CD14-positive monocyte (primary cell): ENCODE measurements at regions of chr21 and their contacts with region 1.

Region 1: DNA sequence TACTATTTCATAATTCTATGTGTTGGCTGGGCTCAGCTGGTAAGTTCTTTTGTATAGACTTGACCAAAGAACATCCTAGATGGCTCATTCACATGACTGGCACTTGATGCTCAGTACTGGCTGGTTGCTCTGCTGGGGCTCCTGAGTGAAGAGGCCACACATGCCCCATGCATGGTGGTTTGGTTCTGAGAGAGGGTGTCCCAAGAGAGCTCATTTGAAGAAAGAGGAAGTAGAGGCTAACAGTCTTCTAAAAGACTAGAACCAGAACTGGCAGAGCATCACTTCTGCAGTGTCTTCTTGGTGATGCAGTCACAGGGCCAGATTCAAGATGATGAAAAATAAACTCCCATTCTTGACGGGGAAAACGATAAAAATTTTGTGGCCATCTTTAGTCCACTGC is 5.2 kb upstream of the BACH1 start:
- DNase-seq: peak; percentile 57 to 69 (median 62)
- H3K4me3 ChIP-seq: no peak overlapping the region
- H3K4me3 Mint-ChIP-seq: no peak overlapping the region
- H3K27ac ChIP-seq: peak overlapping the region; percentile 14 to 29
- H3K27ac Mint-ChIP-seq: peak overlapping the region in 5 of 7 donors; percentile 12 to 89 (median 66)
- H3K4me1 ChIP-seq: peaks cover 25 to 61% of the 10 kb centered on the region in 2 donors
- H3K4me1 Mint-ChIP-seq: peaks cover 51% of the 10 kb centered on the region
- H3K27me3 ChIP-seq: no peaks in the 10 kb centered on the region
- H3K27me3 Mint-ChIP-seq: no peaks in the 10 kb centered on the region
- CTCF ChIP-seq: no peak

Region 2: GRCh38 chr21:29245104-29245643 is 48.3 kb before region 1 on chr21:
- intact Hi-C with region 1: loop called in 1 of 2 experiments (anchors 5 kb)
- DNase-seq: peak in 1 of 3 donors; percentile 35
- H3K4me3 ChIP-seq: peak overlapping the region in 1 of 3 experiments; percentile 9
- H3K4me3 Mint-ChIP-seq: no peak overlapping the region
- H3K27ac ChIP-seq: peak overlapping the region; percentile 12 to 72
- H3K27ac Mint-ChIP-seq: peak overlapping the region; percentile 70 to 87 (median 78)
- H3K4me1 ChIP-seq: peaks cover 30 to 59% of the 10 kb centered on the region in 2 donors
- H3K4me1 Mint-ChIP-seq: peaks cover 34% of the 10 kb centered on the region
- H3K27me3 ChIP-seq: no peaks in the 10 kb centered on the region
- H3K27me3 Mint-ChIP-seq: no peaks in the 10 kb centered on the region
- CTCF ChIP-seq: no peak

Region 3: DNA sequence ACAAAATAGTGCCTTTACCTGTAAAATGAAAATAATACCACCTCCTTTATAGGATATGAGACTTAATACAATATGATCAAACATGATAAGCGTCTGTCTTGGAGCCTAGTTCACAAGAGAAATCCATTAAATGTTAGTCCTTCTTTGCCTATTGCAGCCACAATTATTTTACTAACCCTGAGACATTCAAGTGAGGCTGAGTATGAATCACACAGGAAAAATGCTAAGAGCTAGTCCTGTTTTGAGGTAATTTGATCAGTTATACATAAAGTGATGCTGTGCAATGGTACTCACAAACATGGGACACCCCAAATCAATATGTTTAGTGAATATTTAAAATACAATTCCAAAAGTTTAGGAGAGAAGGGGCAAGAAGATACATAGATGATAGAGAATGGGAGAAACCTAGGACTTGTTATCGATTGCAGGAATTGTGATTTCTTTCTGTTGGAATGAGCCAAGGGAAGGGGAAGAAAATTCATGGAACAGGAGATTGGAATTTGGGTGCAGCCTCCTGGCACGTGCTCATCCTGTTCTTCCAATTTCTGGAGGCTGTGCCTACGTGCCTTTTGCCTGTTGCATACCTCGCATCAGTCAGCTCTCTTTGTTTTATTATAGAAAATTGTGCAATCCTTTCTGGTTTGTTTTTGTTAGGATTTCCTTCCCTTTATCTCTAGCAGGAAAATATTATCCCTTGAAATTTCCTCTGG is 34.7 kb before region 1 on chr21:
- intact Hi-C with region 1: loop called in 1 of 2 experiments (anchors 5 kb)
- DNase-seq: no peak
- H3K4me3 ChIP-seq: no peak overlapping the region
- H3K4me3 Mint-ChIP-seq: no peak overlapping the region
- H3K27ac ChIP-seq: no peak overlapping the region
- H3K27ac Mint-ChIP-seq: peak overlapping the region in 3 of 7 donors; percentile 13 to 37 (median 14)
- H3K4me1 ChIP-seq: peaks cover 28 to 41% of the 10 kb centered on the region in 2 donors
- H3K4me1 Mint-ChIP-seq: peaks cover 39% of the 10 kb centered on the region
- H3K27me3 ChIP-seq: no peaks in the 10 kb centered on the region
- H3K27me3 Mint-ChIP-seq: no peaks in the 10 kb centered on the region
- CTCF ChIP-seq: no peak

Region 4: GRCh38 chr21:29342363-29342957 is 49.0 kb after region 1 on chr21:
- intact Hi-C with region 1: no loop called
- DNase-seq: peak; percentile 29 to 43 (median 32)
- H3K4me3 ChIP-seq: no peak overlapping the region
- H3K4me3 Mint-ChIP-seq: no peak overlapping the region
- H3K27ac ChIP-seq: peak overlapping the region in 1 of 2 donors; percentile 73
- H3K27ac Mint-ChIP-seq: peak overlapping the region; percentile 38 to 88 (median 82)
- H3K4me1 ChIP-seq: peaks cover 13 to 26% of the 10 kb centered on the region in 2 donors
- H3K4me1 Mint-ChIP-seq: peaks cover 41% of the 10 kb centered on the region
- H3K27me3 ChIP-seq: no peaks in the 10 kb centered on the region
- H3K27me3 Mint-ChIP-seq: no peaks in the 10 kb centered on the region
- CTCF ChIP-seq: no peak